Left ventricle myocardium inferior (tissue), 1 donor: ENCODE measurements at regions of chr1 and their contacts with region 1.

Region 1: DNA sequence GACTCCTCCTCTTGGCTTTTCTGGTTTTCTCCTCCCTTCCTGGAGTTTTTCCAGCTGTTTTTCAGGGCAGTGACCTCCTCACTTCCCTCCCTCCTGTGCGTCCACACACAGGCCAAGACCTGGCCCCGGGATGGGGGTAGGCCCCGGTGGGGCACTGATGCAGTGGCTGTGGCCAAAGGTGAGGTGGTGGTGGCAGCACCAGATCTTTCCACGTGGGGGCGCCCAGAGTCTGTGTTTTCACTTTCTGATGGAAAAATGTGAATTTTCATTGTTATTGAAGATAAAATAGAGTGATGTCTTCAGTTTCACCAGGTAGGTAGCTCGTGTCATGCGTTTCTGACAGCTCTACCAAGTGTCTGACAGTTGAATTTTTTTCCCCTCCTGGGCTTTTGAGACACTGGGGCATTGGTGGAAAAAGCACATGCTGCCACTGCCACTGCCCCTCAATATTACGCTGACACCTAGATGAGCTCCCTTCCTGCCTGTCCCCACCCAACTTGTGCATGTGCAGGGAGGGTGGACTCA is 39.9 kb upstream of the MAGOH start:
- DNase-seq: peak; percentile 52
- H3K4me3 ChIP-seq: no peak overlapping the region
- H3K27ac ChIP-seq: no peak overlapping the region
- H3K4me1 ChIP-seq: no peaks in the 10 kb centered on the region
- H3K27me3 ChIP-seq: peaks cover 5% of the 10 kb centered on the region
- CTCF ChIP-seq: peak; percentile 91

Region 2: DNA sequence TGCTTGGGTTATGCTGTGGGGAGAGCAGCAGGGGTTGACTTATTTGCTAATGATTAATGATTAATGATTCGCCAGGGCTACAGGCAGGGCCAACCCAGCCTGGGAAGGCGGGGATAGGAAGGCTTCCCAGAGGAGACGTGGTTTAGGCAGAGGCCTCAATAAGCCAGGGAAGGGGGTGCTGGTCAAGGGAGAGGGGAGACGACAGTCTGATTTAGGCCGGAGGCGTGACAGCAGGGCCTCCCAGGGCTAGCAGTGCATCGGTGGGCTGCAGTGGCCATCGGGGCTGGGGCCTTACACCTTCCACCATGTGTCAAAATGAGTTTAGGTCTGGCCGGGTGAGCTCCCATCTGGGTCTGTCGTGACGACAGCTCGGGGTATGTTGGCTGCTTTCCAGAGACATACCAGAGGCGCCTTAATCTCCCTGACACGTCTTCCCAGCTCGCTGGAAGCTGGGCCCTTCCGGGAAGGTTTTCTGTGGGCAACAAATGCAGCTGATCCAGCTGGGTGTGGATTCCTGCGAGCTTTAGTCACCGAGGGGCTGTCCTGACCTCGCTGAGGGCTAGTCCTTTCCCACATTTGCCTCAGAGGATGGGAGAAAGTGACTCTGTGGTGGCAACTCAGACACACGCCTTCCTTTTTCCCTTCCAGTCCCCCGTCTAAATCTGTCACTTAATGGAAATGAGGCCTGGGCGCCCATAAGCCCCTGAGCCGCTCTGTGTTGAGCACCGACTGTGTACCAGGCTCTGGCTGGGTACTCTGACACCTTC is 132.1 kb before region 1 on chr1:
- intact Hi-C with region 1: no loop called
- DNase-seq: peak; percentile 28
- H3K4me3 ChIP-seq: no peak overlapping the region
- H3K27ac ChIP-seq: peak overlapping the region; percentile 12
- H3K4me1 ChIP-seq: peaks cover 10% of the 10 kb centered on the region
- H3K27me3 ChIP-seq: no peaks in the 10 kb centered on the region
- CTCF ChIP-seq: no peak

Region 3: DNA sequence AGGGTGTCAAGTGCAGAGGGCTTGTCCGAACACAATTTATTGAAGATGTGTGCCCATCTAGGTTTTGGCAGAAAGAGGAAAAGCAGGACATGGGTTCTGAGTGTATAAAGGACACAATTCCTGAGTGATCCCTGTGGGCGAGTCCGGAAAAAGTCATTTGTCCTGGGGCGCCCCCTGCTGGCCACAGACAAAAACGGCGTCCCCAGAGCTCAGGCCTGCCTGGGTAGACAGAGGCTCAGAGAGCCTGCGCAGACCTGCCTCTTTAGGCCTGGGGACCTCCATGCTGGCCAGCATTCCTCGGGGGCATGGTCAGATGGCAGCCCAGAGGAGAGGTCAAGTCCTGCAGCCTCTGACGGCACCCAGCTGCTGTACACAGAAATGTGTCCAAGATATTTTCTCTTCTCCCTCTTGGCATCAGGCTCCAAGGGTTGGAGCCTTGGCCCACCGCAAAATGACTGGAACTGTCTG is 115.1 kb after region 1 on chr1:
- intact Hi-C with region 1: loop called (anchors 5 kb)
- DNase-seq: peak; percentile 73
- H3K4me3 ChIP-seq: no peak overlapping the region
- H3K27ac ChIP-seq: no peak overlapping the region
- H3K4me1 ChIP-seq: no peaks in the 10 kb centered on the region
- H3K27me3 ChIP-seq: peaks cover 37% of the 10 kb centered on the region
- CTCF ChIP-seq: peak; percentile 94